Naive thymus-derived CD4-positive, alpha-beta T cell (primary cell): ENCODE measurements at regions of chr9 and their contacts with region 1.

Region 1: GRCh38 chr9:128127990-128128835 is 684 bp upstream of the PTGES2 start:
- DNase-seq: peak; percentile 81 to 96 (median 93)
- ATAC-seq: peak; percentile 89
- H3K4me3 ChIP-seq: peak overlapping the region; percentile 99
- H3K4me3 Mint-ChIP-seq: peak overlapping the region; percentile 93 to 99 (median 98)
- H3K27ac ChIP-seq: peak overlapping the region; percentile 98
- H3K27ac Mint-ChIP-seq: peak overlapping the region; percentile 97 to 100 (median 99)
- H3K4me1 ChIP-seq: peaks cover 16 to 20% of the 10 kb centered on the region in 2 donors
- H3K4me1 Mint-ChIP-seq: peaks cover 22 to 44% (median 35%) of the 10 kb centered on the region in 7 donors
- H3K27me3 ChIP-seq: no peaks in the 10 kb centered on the region
- H3K27me3 Mint-ChIP-seq: peaks cover 0 to 24% (median 3%) of the 10 kb centered on the region in 5 donors

Region 2: DNA sequence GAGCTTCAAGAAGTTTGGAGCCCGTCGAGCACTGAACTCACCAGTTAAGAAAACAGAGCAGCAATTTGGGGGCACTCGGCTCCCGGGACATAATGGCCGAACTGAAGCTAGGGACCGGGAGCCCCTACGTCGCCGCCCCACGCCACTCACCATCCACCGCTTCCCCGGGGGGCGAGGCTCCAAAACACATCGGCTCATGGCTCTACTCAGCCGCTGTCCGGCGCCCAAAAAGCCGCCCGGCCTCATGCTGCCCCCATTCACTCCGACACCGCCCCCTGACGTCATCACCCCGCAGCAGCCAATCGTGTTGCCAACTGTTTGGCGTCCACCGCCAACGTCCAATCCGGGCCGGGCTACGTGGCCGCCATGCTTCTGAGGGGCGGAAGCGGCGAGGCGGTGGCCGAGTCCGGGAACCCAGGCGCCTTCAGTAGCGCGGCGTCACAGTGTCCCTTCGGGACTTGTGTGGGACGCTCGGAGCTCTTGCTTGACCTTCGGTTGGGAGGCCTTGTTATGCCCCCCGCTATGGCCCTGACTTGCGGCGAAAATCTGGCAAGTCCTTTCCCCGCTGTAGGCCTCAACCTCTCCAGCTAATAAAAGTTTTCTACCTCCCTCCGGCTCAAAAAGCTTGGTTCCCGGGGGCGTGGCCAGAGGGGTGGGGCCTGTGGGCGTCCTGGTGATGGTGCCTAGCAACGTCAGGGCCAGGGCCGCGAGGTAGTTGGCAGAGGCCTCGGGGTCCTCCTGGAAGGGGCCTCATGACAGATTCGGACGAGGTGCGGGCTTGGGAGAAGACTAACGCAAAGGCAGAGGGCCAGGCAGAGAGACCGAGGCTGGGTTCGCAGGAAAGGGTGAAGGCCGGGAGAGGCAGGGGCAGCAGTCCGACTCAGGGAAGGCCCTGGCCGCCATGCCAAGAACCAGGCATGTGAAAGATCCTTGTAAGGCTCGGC is 412.5 kb before region 1 on chr9 and contains the starts of genes PTRH1 and TTC16:
- CTCF ChIA-PET with region 1: no interaction called
- POLR2A ChIA-PET with region 1: no interaction called
- intact Hi-C with region 1: loop called (anchors 1 kb)
- DNase-seq: peak; percentile 91 to 98 (median 96)
- ATAC-seq: peak; percentile 96
- H3K4me3 ChIP-seq: peak within 1 kb of the TSS; percentile 85
- H3K4me3 Mint-ChIP-seq: peak within 1 kb of the TSS; percentile 93 to 100 (median 98)
- H3K27ac ChIP-seq: peak within 1 kb of the TSS; percentile 89
- H3K27ac Mint-ChIP-seq: peak within 1 kb of the TSS; percentile 86 to 99 (median 97)
- H3K4me1 ChIP-seq: peaks cover 31 to 32% of the 10 kb centered on the region in 2 donors
- H3K4me1 Mint-ChIP-seq: peaks cover 28 to 47% (median 30%) of the 10 kb centered on the region in 7 donors
- H3K27me3 ChIP-seq: no peaks in the 10 kb centered on the region
- H3K27me3 Mint-ChIP-seq: no peaks in the 10 kb centered on the region
- total RNA-seq, gene PTRH1: 7.8 to 9.5 (median 8.6) TPM
- total RNA-seq, gene TTC16: 0.29 to 9.9 (median 4.6) TPM

Region 3: DNA sequence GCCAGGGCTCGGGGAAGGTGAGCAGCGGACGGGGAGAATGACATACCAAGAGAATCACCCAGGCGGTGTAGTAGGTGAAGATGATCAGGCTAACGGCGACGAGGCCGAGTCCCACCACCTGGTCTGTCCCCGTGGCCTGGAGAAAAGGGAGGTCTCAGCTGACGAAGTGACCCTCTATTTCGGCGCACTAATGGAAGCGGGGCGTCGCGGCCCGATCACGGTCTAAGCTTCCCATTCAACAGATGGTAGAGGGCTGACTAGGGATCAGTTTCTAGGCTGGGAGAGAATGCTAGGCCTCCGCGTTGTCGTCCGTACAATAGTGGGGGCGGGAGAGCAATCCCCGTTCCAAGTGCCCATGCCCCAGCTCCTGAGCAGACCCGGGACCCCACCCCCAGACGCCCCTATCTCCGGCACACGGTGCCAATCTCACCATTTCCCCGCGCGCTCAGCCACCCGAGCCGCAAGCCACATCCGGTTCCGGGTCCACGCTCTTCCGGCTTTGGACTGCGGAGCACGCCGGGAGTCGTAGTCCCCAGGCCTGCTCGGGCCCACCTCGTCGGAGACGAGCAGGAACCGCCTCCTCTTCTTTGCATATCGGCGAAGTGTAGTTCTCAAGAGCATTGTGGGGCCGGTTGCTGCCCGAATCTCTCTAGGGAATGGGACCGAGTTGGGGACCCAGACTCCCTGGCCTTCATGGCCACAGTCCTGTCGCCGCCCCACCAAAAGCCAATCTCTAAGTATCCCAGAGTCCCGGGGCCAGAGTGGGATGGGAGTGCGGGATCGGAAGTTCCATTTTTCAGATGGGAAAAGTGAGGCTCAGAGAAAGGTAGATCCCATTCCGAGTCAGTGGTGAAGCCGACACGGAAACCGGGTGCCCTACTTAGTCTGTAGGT is 190.6 kb before region 1 on chr9 and contains the start of gene DPM2:
- CTCF ChIA-PET with region 1: no interaction called
- POLR2A ChIA-PET with region 1: no interaction called
- intact Hi-C with region 1: loop called in 1 of 2 experiments (anchors 5 kb)
- DNase-seq: peak; percentile 71 to 90 (median 88)
- ATAC-seq: peak; percentile 96
- H3K4me3 ChIP-seq: peak within 1 kb of the TSS; percentile 88
- H3K4me3 Mint-ChIP-seq: peak within 1 kb of the TSS; percentile 85 to 98 (median 92)
- H3K27ac ChIP-seq: peak within 1 kb of the TSS; percentile 78
- H3K27ac Mint-ChIP-seq: peak within 1 kb of the TSS; percentile 88 to 99 (median 95)
- H3K4me1 ChIP-seq: peaks cover 24 to 25% of the 10 kb centered on the region in 2 donors
- H3K4me1 Mint-ChIP-seq: peaks cover 37 to 61% (median 48%) of the 10 kb centered on the region in 7 donors
- H3K27me3 ChIP-seq: no peaks in the 10 kb centered on the region
- H3K27me3 Mint-ChIP-seq: peaks cover 0 to 4% (median 0%) of the 10 kb centered on the region in 5 donors
- total RNA-seq, gene DPM2: 29.1 to 84.4 (median 56.8) TPM

Region 4: GRCh38 chr9:128142061-128142460 is 13.8 kb after region 1 on chr9:
- CTCF ChIA-PET with region 1: interaction called, 6 read pairs
- POLR2A ChIA-PET with region 1: interaction called, 6 read pairs
- intact Hi-C with region 1: loop called in 1 of 2 experiments (anchors 1 kb)
- DNase-seq: peak in 5 of 9 donors; percentile 26 to 38 (median 29)
- ATAC-seq: no peak
- H3K4me3 ChIP-seq: peak overlapping the region; percentile 23
- H3K4me3 Mint-ChIP-seq: peak overlapping the region; percentile 54 to 87 (median 69)
- H3K27ac ChIP-seq: no peak overlapping the region
- H3K27ac Mint-ChIP-seq: peak overlapping the region; percentile 61 to 93 (median 83)
- H3K4me1 ChIP-seq: peaks cover 0 to 16% of the 10 kb centered on the region in 2 donors
- H3K4me1 Mint-ChIP-seq: peaks cover 11 to 25% (median 17%) of the 10 kb centered on the region in 7 donors
- H3K27me3 ChIP-seq: no peaks in the 10 kb centered on the region
- H3K27me3 Mint-ChIP-seq: no peaks in the 10 kb centered on the region

Region 5: GRCh38 chr9:128175102-128175563 is 46.9 kb after region 1 on chr9:
- CTCF ChIA-PET with region 1: no interaction called
- POLR2A ChIA-PET with region 1: no interaction called
- intact Hi-C with region 1: no loop called
- DNase-seq: no peak
- ATAC-seq: no peak
- H3K4me3 ChIP-seq: no peak overlapping the region
- H3K4me3 Mint-ChIP-seq: no peak overlapping the region
- H3K27ac ChIP-seq: no peak overlapping the region
- H3K27ac Mint-ChIP-seq: peak overlapping the region in 1 of 9 donors; percentile 63
- H3K4me1 ChIP-seq: no peaks in the 10 kb centered on the region
- H3K4me1 Mint-ChIP-seq: no peaks in the 10 kb centered on the region
- H3K27me3 ChIP-seq: no peaks in the 10 kb centered on the region
- H3K27me3 Mint-ChIP-seq: no peaks in the 10 kb centered on the region

Region 6: DNA sequence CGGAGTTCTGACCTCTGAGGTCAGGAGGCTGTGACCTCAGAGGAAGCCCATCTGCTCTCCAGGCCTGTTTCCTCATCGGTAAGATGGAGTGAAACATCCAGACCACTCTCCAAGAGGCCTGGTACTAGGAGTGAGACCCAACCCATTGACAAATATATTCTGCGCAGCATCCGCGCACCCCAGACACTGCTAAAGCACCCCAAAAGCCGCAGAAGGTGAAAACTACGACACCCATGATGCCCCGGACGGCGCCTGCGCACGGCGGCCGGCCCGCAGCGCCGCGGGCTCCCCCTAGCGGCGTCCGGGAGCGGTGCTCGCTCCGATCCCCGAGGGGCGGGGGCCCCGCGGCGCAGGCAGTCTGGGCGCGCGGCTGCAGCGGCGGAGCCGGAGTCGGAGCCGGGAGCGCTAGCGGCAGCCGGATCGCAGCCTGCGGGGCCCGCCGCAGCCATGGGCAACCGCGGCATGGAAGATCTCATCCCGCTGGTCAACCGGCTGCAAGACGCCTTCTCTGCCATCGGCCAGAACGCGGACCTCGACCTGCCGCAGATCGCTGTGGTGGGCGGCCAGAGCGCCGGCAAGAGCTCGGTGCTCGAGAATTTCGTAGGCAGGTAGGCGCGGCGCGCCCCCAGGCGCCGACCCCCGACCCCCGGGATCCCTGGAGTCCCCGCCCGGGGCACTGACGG is 75.0 kb after region 1 on chr9 and contains the start of gene DNM1:
- CTCF ChIA-PET with region 1: no interaction called
- POLR2A ChIA-PET with region 1: no interaction called
- intact Hi-C with region 1: loop called in 1 of 2 experiments (anchors 1 kb)
- DNase-seq: peak; percentile 50 to 89 (median 80)
- ATAC-seq: peak; percentile 99
- H3K4me3 ChIP-seq: peak within 1 kb of the TSS; percentile 51
- H3K4me3 Mint-ChIP-seq: peak within 1 kb of the TSS; percentile 63 to 83 (median 76)
- H3K27ac ChIP-seq: no peak within 1 kb of the TSS
- H3K27ac Mint-ChIP-seq: peak within 1 kb of the TSS in 7 of 9 donors; percentile 3 to 84 (median 73)
- H3K4me1 ChIP-seq: peaks cover 4 to 8% of the 10 kb centered on the region in 2 donors
- H3K4me1 Mint-ChIP-seq: peaks cover 6 to 14% (median 8%) of the 10 kb centered on the region in 7 donors
- H3K27me3 ChIP-seq: peaks cover 0 to 5% of the 10 kb centered on the region in 2 donors
- H3K27me3 Mint-ChIP-seq: peaks cover 0 to 33% (median 6%) of the 10 kb centered on the region in 5 donors
- total RNA-seq, gene DNM1: 0.24 to 2.0 (median 0.94) TPM

Region 7: GRCh38 chr9:128322404-128323211 is 194.4 kb after region 1 on chr9 and contains the starts of genes COQ4 and TRUB2:
- CTCF ChIA-PET with region 1: no interaction called
- POLR2A ChIA-PET with region 1: no interaction called
- intact Hi-C with region 1: loop called in 1 of 2 experiments (anchors 2 kb)
- DNase-seq: peak; percentile 80 to 95 (median 94)
- ATAC-seq: peak; percentile 95
- H3K4me3 ChIP-seq: peak within 1 kb of the TSS; percentile 98
- H3K4me3 Mint-ChIP-seq: peak within 1 kb of the TSS; percentile 82 to 99 (median 96)
- H3K27ac ChIP-seq: peak within 1 kb of the TSS; percentile 85
- H3K27ac Mint-ChIP-seq: peak within 1 kb of the TSS; percentile 95 to 99 (median 98)
- H3K4me1 ChIP-seq: peaks cover 10 to 13% of the 10 kb centered on the region in 2 donors
- H3K4me1 Mint-ChIP-seq: peaks cover 4 to 45% (median 29%) of the 10 kb centered on the region in 7 donors
- H3K27me3 ChIP-seq: no peaks in the 10 kb centered on the region
- H3K27me3 Mint-ChIP-seq: peaks cover 0 to 2% (median 0%) of the 10 kb centered on the region in 5 donors
- total RNA-seq, gene COQ4: 32.9 to 47.2 (median 42.4) TPM
- total RNA-seq, gene TRUB2: 11.5 to 27.2 (median 21.6) TPM

Region 8: DNA sequence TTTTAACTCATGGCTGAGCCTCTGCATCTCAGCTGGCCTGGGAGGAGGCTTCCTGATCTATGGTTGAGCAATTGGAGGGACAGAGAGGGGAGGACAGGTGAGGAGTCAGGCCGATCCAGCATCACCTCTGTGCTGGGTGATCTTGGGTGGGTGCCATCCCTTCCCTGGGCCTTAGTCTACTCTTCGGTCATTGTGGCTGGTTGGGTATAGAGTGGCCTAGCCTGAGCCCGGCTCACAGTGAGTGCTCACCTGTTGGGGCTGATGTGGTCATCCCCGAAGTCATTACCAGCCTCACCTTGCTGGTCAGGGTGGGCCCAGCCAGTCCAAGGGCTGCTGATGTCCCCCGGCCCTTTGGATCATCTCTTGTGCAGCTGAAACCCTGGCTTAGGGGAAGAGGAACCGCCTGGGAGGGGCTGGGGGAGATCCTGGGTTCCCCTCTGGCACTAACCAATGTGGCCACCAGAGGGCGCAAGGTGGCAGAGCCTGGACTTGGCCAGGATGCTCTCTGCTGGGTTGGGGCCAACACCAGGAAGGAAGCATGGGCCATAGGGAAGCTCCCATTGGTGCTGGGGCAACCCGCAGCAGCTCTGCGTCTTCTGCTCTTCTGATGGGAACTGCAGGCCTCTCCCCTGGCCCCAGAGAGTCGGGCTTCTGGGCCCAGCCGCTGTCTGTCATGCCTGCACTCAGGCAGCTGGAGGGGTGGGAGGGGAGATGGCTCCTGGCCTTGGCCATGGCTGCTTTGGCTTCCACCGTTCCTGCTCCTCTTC is 310.3 kb after region 1 on chr9:
- CTCF ChIA-PET with region 1: no interaction called
- POLR2A ChIA-PET with region 1: no interaction called
- intact Hi-C with region 1: no loop called
- DNase-seq: peak; percentile 40 to 86 (median 70)
- ATAC-seq: peak; percentile 97
- H3K4me3 ChIP-seq: no peak overlapping the region
- H3K4me3 Mint-ChIP-seq: no peak overlapping the region
- H3K27ac ChIP-seq: no peak overlapping the region
- H3K27ac Mint-ChIP-seq: no peak overlapping the region
- H3K4me1 ChIP-seq: no peaks in the 10 kb centered on the region
- H3K4me1 Mint-ChIP-seq: peaks cover 0 to 6% (median 4%) of the 10 kb centered on the region in 7 donors
- H3K27me3 ChIP-seq: no peaks in the 10 kb centered on the region
- H3K27me3 Mint-ChIP-seq: no peaks in the 10 kb centered on the region